Heart right ventricle (tissue), 16 donors: ENCODE measurements at regions of chrX and their contacts with region 1.

Region 1: GRCh38 chrX:55717521-55718497 is at the start of gene RRAGB:
- DNase-seq: peak; percentile 91 to 93
- ATAC-seq: peak; percentile 100
- H3K4me3 ChIP-seq: peak within 1 kb of the TSS; percentile 32 to 85 (median 74)
- H3K27ac ChIP-seq: peak within 1 kb of the TSS; percentile 24 to 94 (median 84)
- H3K4me1 ChIP-seq: peaks cover 0 to 21% (median 4%) of the 10 kb centered on the region in 9 donors
- H3K27me3 ChIP-seq: no peaks in the 10 kb centered on the region
- CTCF ChIP-seq: peak; percentile 10 to 62 (median 47)
- total RNA-seq, gene RRAGB: 9.2 to 13.3 (median 10.8) TPM

Region 2: DNA sequence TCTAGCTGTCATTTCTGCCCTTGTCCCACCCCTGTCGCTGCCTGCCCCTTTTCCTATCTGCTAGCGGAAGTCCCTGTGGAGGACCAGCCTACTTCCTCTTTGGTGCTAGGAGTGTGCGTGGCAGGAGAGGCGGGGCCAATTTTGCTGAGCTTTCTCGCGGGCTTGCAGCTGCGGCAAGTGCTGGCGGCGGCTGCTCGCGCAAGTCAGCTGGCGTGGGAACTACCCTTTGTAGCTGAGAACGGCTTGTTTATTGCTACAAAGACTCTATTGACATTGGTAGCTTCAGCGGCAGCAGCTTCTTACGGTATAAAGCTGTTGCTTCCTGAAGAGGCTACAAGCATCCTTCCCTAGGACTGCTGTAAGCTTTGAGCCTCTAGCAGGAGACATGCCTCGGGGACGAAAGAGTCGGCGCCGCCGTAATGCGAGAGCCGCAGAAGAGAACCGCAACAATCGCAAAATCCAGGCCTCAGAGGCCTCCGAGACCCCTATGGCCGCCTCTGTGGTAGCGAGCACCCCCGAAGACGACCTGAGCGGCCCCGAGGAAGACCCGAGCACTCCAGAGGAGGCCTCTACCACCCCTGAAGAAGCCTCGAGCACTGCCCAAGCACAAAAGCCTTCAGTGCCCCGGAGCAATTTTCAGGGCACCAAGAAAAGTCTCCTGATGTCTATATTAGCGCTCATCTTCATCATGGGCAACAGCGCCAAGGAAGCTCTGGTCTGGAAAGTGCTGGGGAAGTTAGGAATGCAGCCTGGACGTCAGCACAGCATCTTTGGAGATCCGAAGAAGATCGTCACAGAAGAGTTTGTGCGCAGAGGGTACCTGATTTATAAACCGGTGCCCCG is 265.6 kb before region 1 on chrX and contains the start of gene MAGEH1:
- intact Hi-C with region 1: loop called in 1 of 10 experiments (anchors 10 kb)
- DNase-seq: peak; percentile 80 to 87
- ATAC-seq: peak; percentile 98 to 99 (median 99)
- H3K4me3 ChIP-seq: peak within 1 kb of the TSS; percentile 64 to 86 (median 73)
- H3K27ac ChIP-seq: peak within 1 kb of the TSS; percentile 58 to 89 (median 84)
- H3K4me1 ChIP-seq: peaks cover 0 to 7% (median 0%) of the 10 kb centered on the region in 9 donors
- H3K27me3 ChIP-seq: no peaks in the 10 kb centered on the region
- CTCF ChIP-seq: no peak
- total RNA-seq, gene MAGEH1: 9.2 to 15.0 (median 11.8) TPM

Region 3: GRCh38 chrX:55907968-55908607 is 190.3 kb after region 1 on chrX:
- intact Hi-C with region 1: loop called in 1 of 10 experiments (anchors 5 kb)
- DNase-seq: peak; percentile 38 to 41
- ATAC-seq: peak; percentile 55 to 96 (median 86)
- H3K4me3 ChIP-seq: peak overlapping the region; percentile 52 to 74 (median 65)
- H3K27ac ChIP-seq: peak overlapping the region in 9 of 10 donors; percentile 18 to 80 (median 62)
- H3K4me1 ChIP-seq: peaks cover 0 to 6% (median 0%) of the 10 kb centered on the region in 9 donors
- H3K27me3 ChIP-seq: peaks cover 0 to 3% (median 0%) of the 10 kb centered on the region in 7 donors
- CTCF ChIP-seq: peak in 8 of 9 donors; percentile 31 to 61 (median 50)